ENCODE measurements at regions of chr4 and their contacts with region 1.

Region 1: GRCh38 chr4:55345980-55346850 is at the start of gene SRD5A3:
- DNase-seq: peak; percentile 47 to 87 (median 73)
- ATAC-seq: peak; percentile 83
- H3K4me3 ChIP-seq: peak within 1 kb of the TSS; percentile 70
- H3K4me3 Mint-ChIP-seq: peak within 1 kb of the TSS; percentile 89
- H3K27ac ChIP-seq: peak within 1 kb of the TSS; percentile 56 to 68
- H3K27ac Mint-ChIP-seq: peak within 1 kb of the TSS; percentile 72
- H3K4me1 ChIP-seq: peaks cover 11% of the 10 kb centered on the region
- H3K4me1 Mint-ChIP-seq: peaks cover 18% of the 10 kb centered on the region
- H3K27me3 ChIP-seq: no peaks in the 10 kb centered on the region
- H3K27me3 Mint-ChIP-seq: no peaks in the 10 kb centered on the region
- CTCF ChIP-seq: peak; percentile 99
- total RNA-seq, gene SRD5A3: 2.1 to 2.2 TPM

Region 2: GRCh38 chr4:55175779-55176231 is 170.4 kb before region 1 on chr4:
- CTCF ChIA-PET with region 1: no interaction called
- POLR2A ChIA-PET with region 1: no interaction called
- intact Hi-C with region 1: no loop called
- DNase-seq: no peak
- ATAC-seq: no peak
- H3K4me3 ChIP-seq: no peak overlapping the region
- H3K4me3 Mint-ChIP-seq: no peak overlapping the region
- H3K27ac ChIP-seq: no peak overlapping the region
- H3K27ac Mint-ChIP-seq: no peak overlapping the region
- H3K4me1 ChIP-seq: no peaks in the 10 kb centered on the region
- H3K4me1 Mint-ChIP-seq: no peaks in the 10 kb centered on the region
- H3K27me3 ChIP-seq: peaks cover 0 to 4% of the 10 kb centered on the region in 2 experiments
- H3K27me3 Mint-ChIP-seq: no peaks in the 10 kb centered on the region
- CTCF ChIP-seq: no peak

Region 3: DNA sequence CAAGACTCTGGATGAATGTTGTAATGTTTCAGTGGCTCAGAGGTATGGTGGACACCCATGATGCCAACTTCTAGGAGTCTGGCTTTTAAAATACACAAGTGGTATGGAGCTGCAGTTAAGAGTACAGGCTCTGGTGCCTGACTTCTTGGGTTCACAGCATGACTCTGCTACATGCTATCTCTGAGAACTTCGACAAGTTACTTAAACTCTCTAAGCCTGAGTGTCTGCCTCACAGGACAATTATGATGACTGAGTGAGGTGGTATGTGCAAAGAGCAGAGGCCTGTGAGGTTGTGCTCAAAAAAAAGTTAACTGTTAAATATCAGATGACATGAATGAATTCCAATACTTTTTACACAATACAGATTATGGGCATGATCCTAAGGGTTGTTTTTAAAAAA is 91.0 kb before region 1 on chr4:
- CTCF ChIA-PET with region 1: no interaction called
- POLR2A ChIA-PET with region 1: no interaction called
- intact Hi-C with region 1: no loop called
- DNase-seq: no peak
- ATAC-seq: no peak
- H3K4me3 ChIP-seq: no peak overlapping the region
- H3K4me3 Mint-ChIP-seq: no peak overlapping the region
- H3K27ac ChIP-seq: no peak overlapping the region
- H3K27ac Mint-ChIP-seq: no peak overlapping the region
- H3K4me1 ChIP-seq: no peaks in the 10 kb centered on the region
- H3K4me1 Mint-ChIP-seq: no peaks in the 10 kb centered on the region
- H3K27me3 ChIP-seq: peaks cover 0 to 9% of the 10 kb centered on the region in 2 experiments
- H3K27me3 Mint-ChIP-seq: peaks cover 24% of the 10 kb centered on the region
- CTCF ChIP-seq: no peak

Region 4: DNA sequence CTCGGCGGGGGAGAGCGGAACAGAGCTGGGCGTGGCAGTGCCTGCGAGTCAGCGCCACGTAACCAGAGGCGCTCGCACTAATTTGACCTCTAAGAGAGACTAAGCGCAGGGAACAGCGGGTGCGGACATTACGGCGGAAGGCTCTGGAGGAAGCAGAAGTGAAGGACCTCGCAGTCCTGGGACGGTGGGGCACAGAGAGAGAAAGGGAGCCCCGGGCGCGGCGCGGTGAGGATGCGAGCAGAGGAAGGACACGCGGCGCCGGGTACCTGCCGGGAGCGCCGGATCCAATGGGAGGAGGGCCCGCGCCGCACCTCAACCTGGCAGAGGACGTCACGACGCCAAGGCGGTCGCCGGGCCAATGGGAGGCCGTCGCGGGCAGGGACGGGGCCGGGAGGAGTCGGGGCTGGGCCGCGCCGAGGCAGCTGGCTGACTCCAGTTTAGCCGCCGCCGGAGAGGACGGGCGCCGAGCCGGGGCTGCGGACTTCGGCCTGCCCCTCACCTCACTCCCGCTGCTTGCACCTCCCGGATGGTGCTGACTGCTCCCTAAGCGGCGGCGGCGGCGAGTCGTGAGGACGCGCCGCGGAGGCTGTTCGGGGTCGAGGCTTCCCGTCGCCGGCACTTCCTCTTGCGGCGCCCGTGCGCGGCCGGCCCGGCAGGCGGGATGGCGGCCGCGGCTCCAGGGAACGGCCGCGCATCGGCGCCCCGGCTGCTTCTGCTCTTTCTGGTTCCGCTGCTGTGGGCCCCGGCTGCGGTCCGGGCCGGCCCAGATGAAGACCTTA is 49.5 kb after region 1 on chr4 and contains the start of gene TMEM165:
- CTCF ChIA-PET with region 1: interaction called, 11 read pairs
- POLR2A ChIA-PET with region 1: interaction called, 23 read pairs
- intact Hi-C with region 1: loop called (anchors 1 to 2 kb)
- DNase-seq: peak; percentile 77 to 94 (median 84)
- ATAC-seq: peak; percentile 93
- H3K4me3 ChIP-seq: peak within 1 kb of the TSS; percentile 79
- H3K4me3 Mint-ChIP-seq: peak within 1 kb of the TSS; percentile 97
- H3K27ac ChIP-seq: peak within 1 kb of the TSS; percentile 73 to 94
- H3K27ac Mint-ChIP-seq: peak within 1 kb of the TSS; percentile 89
- H3K4me1 ChIP-seq: peaks cover 34% of the 10 kb centered on the region
- H3K4me1 Mint-ChIP-seq: peaks cover 44% of the 10 kb centered on the region
- H3K27me3 ChIP-seq: no peaks in the 10 kb centered on the region
- H3K27me3 Mint-ChIP-seq: no peaks in the 10 kb centered on the region
- CTCF ChIP-seq: no peak
- total RNA-seq, gene TMEM165: 44.8 to 46.0 TPM

Region 5: DNA sequence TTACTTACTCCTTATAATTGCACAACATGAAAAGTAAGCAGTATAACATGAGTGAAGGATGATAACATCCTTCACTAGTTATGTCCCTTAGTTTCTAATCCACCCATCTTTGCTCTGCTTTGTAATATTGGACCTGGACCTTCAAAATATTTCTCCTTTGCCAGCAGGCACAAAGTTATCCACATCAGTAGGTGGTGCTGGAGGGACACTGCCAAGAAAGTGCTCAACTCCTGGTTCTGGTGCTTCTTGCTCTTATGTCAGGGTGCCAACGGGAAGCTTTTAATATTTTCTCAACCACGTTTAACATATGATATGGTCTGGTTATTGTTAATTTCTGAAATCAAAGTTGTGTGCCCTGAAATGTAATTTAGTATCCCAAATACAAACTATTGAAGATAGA is 98.6 kb after region 1 on chr4:
- CTCF ChIA-PET with region 1: no interaction called
- POLR2A ChIA-PET with region 1: interaction called, 3 read pairs
- intact Hi-C with region 1: loop called in 1 of 2 experiments (anchors 5 kb)
- DNase-seq: peak in 2 of 14 experiments; percentile 20 to 26
- ATAC-seq: no peak
- H3K4me3 ChIP-seq: no peak overlapping the region
- H3K4me3 Mint-ChIP-seq: no peak overlapping the region
- H3K27ac ChIP-seq: no peak overlapping the region
- H3K27ac Mint-ChIP-seq: no peak overlapping the region
- H3K4me1 ChIP-seq: peaks cover 5% of the 10 kb centered on the region
- H3K4me1 Mint-ChIP-seq: peaks cover 23% of the 10 kb centered on the region
- H3K27me3 ChIP-seq: no peaks in the 10 kb centered on the region
- H3K27me3 Mint-ChIP-seq: no peaks in the 10 kb centered on the region
- CTCF ChIP-seq: no peak

Region 6: GRCh38 chr4:55554453-55555030 is 208.3 kb after region 1 on chr4:
- CTCF ChIA-PET with region 1: interaction called, 3 read pairs
- POLR2A ChIA-PET with region 1: no interaction called
- intact Hi-C with region 1: loop called (anchors 1 to 2 kb)
- DNase-seq: peak in 4 of 14 experiments; percentile 10 to 65 (median 62)
- ATAC-seq: peak; percentile 55
- H3K4me3 ChIP-seq: no peak overlapping the region
- H3K4me3 Mint-ChIP-seq: no peak overlapping the region
- H3K27ac ChIP-seq: no peak overlapping the region
- H3K27ac Mint-ChIP-seq: no peak overlapping the region
- H3K4me1 ChIP-seq: no peaks in the 10 kb centered on the region
- H3K4me1 Mint-ChIP-seq: no peaks in the 10 kb centered on the region
- H3K27me3 ChIP-seq: no peaks in the 10 kb centered on the region
- H3K27me3 Mint-ChIP-seq: peaks cover 4% of the 10 kb centered on the region
- CTCF ChIP-seq: peak; percentile 78

Region 7: DNA sequence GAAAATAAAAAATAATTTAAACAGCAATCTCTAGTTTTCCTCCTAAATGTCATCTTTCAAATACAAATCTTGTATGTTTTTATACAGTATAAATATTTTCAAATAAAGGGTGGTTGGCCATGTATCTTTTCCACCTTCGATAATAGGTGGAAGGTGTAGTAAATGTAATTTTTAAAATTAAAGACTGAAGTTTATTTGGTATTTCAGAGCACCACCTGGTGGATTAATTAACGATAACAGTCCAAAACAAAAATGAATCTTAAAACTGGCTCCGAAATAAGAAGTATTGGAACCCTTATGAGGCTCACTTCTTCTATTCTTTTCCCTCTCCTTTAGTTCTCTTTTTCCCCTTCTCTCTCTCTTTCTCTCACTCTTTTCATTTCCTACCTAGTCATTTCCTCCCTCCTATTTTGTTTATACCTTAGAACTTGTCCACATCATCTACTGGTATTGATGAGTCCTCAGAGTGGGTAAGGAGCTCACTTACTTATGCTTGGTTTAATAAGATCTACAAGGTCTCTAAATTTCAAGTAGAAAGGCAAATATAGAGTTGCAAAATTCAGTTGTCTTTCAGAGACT is 390.5 kb after region 1 on chr4:
- CTCF ChIA-PET with region 1: no interaction called
- POLR2A ChIA-PET with region 1: no interaction called
- intact Hi-C with region 1: loop called in 1 of 2 experiments (anchors 10 kb)
- DNase-seq: peak in 2 of 14 experiments; percentile 8 to 11
- ATAC-seq: no peak
- H3K4me3 ChIP-seq: no peak overlapping the region
- H3K4me3 Mint-ChIP-seq: no peak overlapping the region
- H3K27ac ChIP-seq: no peak overlapping the region
- H3K27ac Mint-ChIP-seq: no peak overlapping the region
- H3K4me1 ChIP-seq: no peaks in the 10 kb centered on the region
- H3K4me1 Mint-ChIP-seq: no peaks in the 10 kb centered on the region
- H3K27me3 ChIP-seq: peaks cover 0 to 11% of the 10 kb centered on the region in 2 experiments
- H3K27me3 Mint-ChIP-seq: peaks cover 54% of the 10 kb centered on the region
- CTCF ChIP-seq: no peak

Region 8: DNA sequence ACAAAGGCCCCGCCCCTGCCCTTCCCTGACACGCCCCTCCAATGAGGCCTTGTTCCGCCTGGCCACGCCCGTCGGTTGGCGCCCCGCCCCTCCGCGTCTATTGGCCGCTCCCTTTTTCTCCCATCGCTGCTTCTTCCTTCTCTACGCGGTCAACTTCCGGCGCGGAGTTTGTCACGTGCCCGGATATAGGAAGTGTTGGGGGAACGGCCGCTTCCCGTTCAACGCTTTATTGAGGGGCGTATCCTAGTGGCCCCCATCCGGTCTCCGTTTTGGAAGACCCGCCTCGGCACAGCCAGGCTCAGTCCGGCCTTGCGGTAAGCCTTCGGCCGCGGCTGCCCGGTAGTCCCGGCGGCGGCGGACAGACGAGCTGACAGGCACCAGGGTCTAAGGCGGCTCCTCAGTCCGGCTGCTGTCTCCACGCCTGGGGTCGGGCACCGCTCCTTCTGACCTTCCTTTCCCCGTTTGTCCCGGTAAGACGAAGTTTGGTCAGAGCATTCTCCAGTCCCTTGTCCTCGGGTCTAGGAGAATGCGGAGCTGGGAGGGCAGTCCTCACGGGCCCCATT is 507.4 kb after region 1 on chr4 and contains the start of gene EXOC1:
- CTCF ChIA-PET with region 1: no interaction called
- POLR2A ChIA-PET with region 1: no interaction called
- intact Hi-C with region 1: loop called in 1 of 2 experiments (anchors 5 kb)
- DNase-seq: peak; percentile 93 to 99 (median 97)
- ATAC-seq: peak; percentile 95
- H3K4me3 ChIP-seq: peak within 1 kb of the TSS; percentile 96
- H3K4me3 Mint-ChIP-seq: no peak within 1 kb of the TSS
- H3K27ac ChIP-seq: peak within 1 kb of the TSS; percentile 68 to 86
- H3K27ac Mint-ChIP-seq: peak within 1 kb of the TSS; percentile 60
- H3K4me1 ChIP-seq: peaks cover 28% of the 10 kb centered on the region
- H3K4me1 Mint-ChIP-seq: peaks cover 33% of the 10 kb centered on the region
- H3K27me3 ChIP-seq: no peaks in the 10 kb centered on the region
- H3K27me3 Mint-ChIP-seq: no peaks in the 10 kb centered on the region
- CTCF ChIP-seq: no peak
- total RNA-seq, gene EXOC1: 15.2 to 15.7 TPM

Region 9: GRCh38 chr4:55866973-55867574 is 520.9 kb after region 1 on chr4:
- CTCF ChIA-PET with region 1: no interaction called
- POLR2A ChIA-PET with region 1: no interaction called
- intact Hi-C with region 1: loop called in 1 of 2 experiments (anchors 5 kb)
- DNase-seq: peak in 6 of 14 experiments; percentile 9 to 74 (median 50)
- ATAC-seq: peak; percentile 91
- H3K4me3 ChIP-seq: no peak overlapping the region
- H3K4me3 Mint-ChIP-seq: no peak overlapping the region
- H3K27ac ChIP-seq: no peak overlapping the region
- H3K27ac Mint-ChIP-seq: no peak overlapping the region
- H3K4me1 ChIP-seq: no peaks in the 10 kb centered on the region
- H3K4me1 Mint-ChIP-seq: peaks cover 17% of the 10 kb centered on the region
- H3K27me3 ChIP-seq: no peaks in the 10 kb centered on the region
- H3K27me3 Mint-ChIP-seq: no peaks in the 10 kb centered on the region
- CTCF ChIP-seq: peak; percentile 99